CD8-positive, alpha-beta T cell (primary cell): ENCODE measurements at regions of chr2 and their contacts with region 1.

Region 1: GRCh38 chr2:200713003-200713703 is 98.6 kb upstream of the BZW1 start:
- DNase-seq: peak; percentile 84 to 98 (median 92)
- ATAC-seq: peak; percentile 94
- H3K4me3 ChIP-seq: peak overlapping the region; percentile 5 to 25
- H3K4me3 Mint-ChIP-seq: peak overlapping the region; percentile 68
- H3K27ac ChIP-seq: peak overlapping the region; percentile 75 to 98
- H3K27ac Mint-ChIP-seq: peak overlapping the region; percentile 98
- H3K4me1 ChIP-seq: peaks cover 8% of the 10 kb centered on the region
- H3K4me1 Mint-ChIP-seq: peaks cover 11% of the 10 kb centered on the region
- H3K27me3 ChIP-seq: no peaks in the 10 kb centered on the region
- H3K27me3 Mint-ChIP-seq: peaks cover 3% of the 10 kb centered on the region
- CTCF ChIP-seq: peak; percentile 85

Region 2: DNA sequence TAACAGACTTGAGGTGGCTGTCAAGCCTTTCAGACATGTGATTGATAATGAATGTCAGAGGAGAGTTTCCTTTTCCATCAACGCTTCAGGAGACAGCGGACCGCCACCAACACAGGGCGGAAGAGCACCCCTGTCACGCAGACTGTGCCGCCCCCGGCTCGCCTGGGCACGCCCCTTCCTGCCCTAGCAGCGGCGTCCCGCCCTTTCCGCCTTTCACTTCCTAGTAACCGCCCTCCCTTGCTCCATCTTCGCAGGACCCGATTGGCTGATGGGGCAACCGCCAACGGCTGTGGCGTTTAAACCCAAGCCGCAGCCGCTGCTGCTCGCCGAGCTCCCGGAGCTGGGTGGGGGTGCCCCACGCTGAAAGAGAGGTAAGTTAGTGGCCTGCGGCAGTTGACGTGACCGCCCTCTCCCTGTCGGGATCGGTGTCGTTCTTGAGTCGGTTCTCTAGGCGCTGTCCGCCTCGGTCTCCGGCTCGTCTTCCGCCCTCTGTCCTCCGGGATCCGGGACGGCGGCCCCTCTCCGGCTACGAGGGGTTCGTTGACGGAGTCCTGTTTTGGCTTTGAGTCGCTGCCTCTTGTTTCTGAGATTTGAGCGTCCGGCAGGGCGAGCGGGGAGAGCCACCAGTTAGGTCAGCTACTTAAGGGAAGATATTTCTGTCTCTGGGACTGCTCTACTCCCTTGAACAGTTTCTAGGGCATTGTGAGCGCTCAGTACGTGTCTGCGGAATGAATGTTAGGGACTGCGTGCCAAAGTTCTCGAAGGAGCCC is 187.1 kb before region 1 on chr2 and contains the start of gene SGO2:
- CTCF ChIA-PET with region 1: no interaction called
- POLR2A ChIA-PET with region 1: interaction called, 3 read pairs
- intact Hi-C with region 1: loop called (anchors 1 to 5 kb)
- DNase-seq: peak; percentile 92 to 97 (median 95)
- ATAC-seq: peak; percentile 100
- H3K4me3 ChIP-seq: peak within 1 kb of the TSS; percentile 73 to 84
- H3K4me3 Mint-ChIP-seq: peak within 1 kb of the TSS; percentile 91
- H3K27ac ChIP-seq: peak within 1 kb of the TSS; percentile 18 to 71
- H3K27ac Mint-ChIP-seq: peak within 1 kb of the TSS; percentile 87
- H3K4me1 ChIP-seq: peaks cover 7% of the 10 kb centered on the region
- H3K4me1 Mint-ChIP-seq: peaks cover 10% of the 10 kb centered on the region
- H3K27me3 ChIP-seq: no peaks in the 10 kb centered on the region
- H3K27me3 Mint-ChIP-seq: no peaks in the 10 kb centered on the region
- CTCF ChIP-seq: no peak
- total RNA-seq, gene SGO2: 0.52 to 0.69 TPM

Region 3: DNA sequence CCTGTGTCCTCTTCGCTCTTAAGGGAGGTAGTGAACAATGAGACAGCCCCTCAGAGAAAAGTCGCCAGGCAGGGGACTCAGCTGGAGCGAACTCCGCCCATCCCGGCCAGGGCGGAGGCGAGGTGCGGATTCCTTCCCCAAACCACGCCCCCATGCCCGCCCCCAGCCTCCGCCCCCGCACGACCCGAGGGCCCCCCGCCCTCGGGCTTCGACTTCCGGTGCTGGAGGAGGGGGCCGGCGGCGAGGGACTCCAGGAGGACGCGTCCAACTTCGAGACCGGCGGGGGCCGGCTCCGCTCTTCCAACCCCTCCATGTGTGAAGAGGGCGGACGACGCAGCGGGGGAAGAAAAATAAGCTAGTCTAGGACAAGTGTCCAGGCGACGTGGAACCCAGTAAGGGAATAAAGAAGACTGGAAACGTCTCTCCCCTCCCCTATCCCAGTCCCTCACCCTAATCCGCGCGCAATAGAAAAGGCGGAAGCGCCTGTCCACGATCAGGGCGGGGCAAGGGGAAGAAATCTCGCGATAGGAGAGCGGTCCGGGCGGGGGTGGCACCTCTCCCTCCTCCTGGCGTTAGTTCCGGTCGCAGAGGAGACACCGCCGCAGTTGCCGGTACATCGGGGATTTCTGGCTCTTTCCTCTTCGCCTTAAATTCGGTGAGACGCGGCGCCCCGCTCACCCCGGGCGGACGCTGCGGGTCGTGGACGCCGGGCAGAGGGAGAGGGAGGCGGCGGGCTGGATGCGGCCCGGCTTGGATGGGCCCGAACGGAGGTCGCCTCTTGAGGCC is 98.4 kb after region 1 on chr2 and contains the start of gene BZW1:
- CTCF ChIA-PET with region 1: interaction called, 6 read pairs
- POLR2A ChIA-PET with region 1: interaction called, 19 read pairs
- intact Hi-C with region 1: loop called (anchors 1 kb)
- DNase-seq: peak; percentile 94 to 98 (median 97)
- ATAC-seq: peak; percentile 82
- H3K4me3 ChIP-seq: peak within 1 kb of the TSS; percentile 69 to 90
- H3K4me3 Mint-ChIP-seq: peak within 1 kb of the TSS; percentile 99
- H3K27ac ChIP-seq: peak within 1 kb of the TSS; percentile 98
- H3K27ac Mint-ChIP-seq: peak within 1 kb of the TSS; percentile 98
- H3K4me1 ChIP-seq: peaks cover 33% of the 10 kb centered on the region
- H3K4me1 Mint-ChIP-seq: peaks cover 48% of the 10 kb centered on the region
- H3K27me3 ChIP-seq: no peaks in the 10 kb centered on the region
- H3K27me3 Mint-ChIP-seq: no peaks in the 10 kb centered on the region
- CTCF ChIP-seq: no peak
- total RNA-seq, gene BZW1: 330 to 338 TPM

Region 4: DNA sequence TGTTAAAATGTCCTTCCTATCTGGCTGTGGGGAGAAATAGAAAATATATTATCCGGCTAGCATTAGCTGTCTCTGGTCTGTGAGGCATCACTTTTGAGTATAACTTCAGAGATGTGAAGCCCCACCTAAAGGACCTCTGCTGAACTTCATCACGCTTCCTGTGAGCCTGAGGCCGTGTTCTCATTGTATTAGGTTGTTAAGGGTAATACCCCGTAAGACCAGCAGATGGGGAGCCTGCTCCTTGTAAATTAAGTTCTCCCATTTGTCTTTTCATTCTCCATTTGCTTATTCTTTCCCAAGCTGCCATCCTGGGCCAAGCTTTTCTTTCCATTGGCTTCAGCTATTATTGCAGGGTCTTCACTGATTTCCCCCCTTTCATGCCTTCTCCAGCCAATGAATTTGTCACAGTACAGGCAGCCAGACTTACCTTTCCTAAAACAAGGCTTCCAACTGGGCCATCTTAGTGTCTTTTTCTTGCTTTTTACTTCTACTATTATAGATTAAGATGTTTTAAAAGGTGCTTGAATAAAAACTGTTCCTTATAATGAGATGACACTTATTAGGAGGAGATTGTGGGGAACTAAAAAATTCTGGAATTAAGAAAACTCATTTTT is 188.4 kb after region 1 on chr2:
- CTCF ChIA-PET with region 1: interaction called, 3 read pairs
- POLR2A ChIA-PET with region 1: interaction called, 3 read pairs
- intact Hi-C with region 1: loop called (anchors 1 to 2 kb)
- DNase-seq: peak; percentile 36 to 92 (median 73)
- ATAC-seq: peak; percentile 100
- H3K4me3 ChIP-seq: no peak overlapping the region
- H3K4me3 Mint-ChIP-seq: no peak overlapping the region
- H3K27ac ChIP-seq: peak overlapping the region in 1 of 2 experiments; percentile 4
- H3K27ac Mint-ChIP-seq: peak overlapping the region; percentile 45
- H3K4me1 ChIP-seq: peaks cover 4% of the 10 kb centered on the region
- H3K4me1 Mint-ChIP-seq: peaks cover 7% of the 10 kb centered on the region
- H3K27me3 ChIP-seq: no peaks in the 10 kb centered on the region
- H3K27me3 Mint-ChIP-seq: no peaks in the 10 kb centered on the region
- CTCF ChIP-seq: peak; percentile 84

Region 5: DNA sequence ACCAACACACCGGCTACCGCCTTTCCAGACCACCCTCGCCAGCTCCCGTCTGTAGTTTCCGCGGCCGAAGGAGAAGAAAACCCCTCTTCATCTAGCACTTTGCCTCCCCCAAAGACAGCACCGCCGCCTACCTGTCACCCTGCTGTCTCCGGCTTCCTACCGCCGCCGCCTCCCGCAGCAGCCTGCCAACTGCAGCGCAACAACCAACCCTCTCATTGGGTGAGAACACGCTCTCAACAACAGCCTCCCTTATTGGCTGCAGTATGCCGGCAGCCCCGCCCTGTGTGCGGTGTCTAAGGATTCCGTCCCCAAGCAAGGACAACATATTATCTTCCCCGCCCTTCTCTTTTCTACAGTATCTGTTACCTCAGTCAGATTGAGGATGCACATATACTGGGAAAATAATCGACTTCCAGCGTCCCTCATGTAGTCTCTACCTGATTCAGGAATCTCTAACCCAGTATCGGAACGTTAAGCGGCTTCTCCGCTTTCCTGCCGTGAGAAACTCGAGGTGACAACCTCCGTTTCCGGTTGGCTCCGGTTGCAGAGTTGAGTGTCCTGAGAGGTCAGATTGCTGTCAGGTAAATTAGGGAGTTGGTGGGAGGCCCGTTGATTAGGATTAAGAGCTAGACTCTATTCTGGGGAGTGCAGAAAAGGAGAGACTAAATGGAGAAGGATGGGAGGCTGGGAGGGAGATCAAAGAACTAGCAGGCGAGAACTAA is 358.5 kb after region 1 on chr2 and contains the starts of genes HYCC2 and NDUFB3:
- CTCF ChIA-PET with region 1: interaction called, 22 read pairs
- POLR2A ChIA-PET with region 1: interaction called, 8 read pairs
- intact Hi-C with region 1: loop called (anchors 1 to 5 kb)
- DNase-seq: peak; percentile 79 to 98 (median 92)
- ATAC-seq: peak; percentile 93
- H3K4me3 ChIP-seq: peak within 1 kb of the TSS; percentile 61 to 70
- H3K4me3 Mint-ChIP-seq: peak within 1 kb of the TSS; percentile 95
- H3K27ac ChIP-seq: peak within 1 kb of the TSS; percentile 61 to 81
- H3K27ac Mint-ChIP-seq: peak within 1 kb of the TSS; percentile 97
- H3K4me1 ChIP-seq: peaks cover 42% of the 10 kb centered on the region
- H3K4me1 Mint-ChIP-seq: peaks cover 54% of the 10 kb centered on the region
- H3K27me3 ChIP-seq: no peaks in the 10 kb centered on the region
- H3K27me3 Mint-ChIP-seq: no peaks in the 10 kb centered on the region
- CTCF ChIP-seq: peak; percentile 38
- total RNA-seq, gene HYCC2: 35.7 to 36.8 TPM
- total RNA-seq, gene NDUFB3: 11.6 to 13.1 TPM

Region 6: GRCh38 chr2:201176081-201176481 is 462.9 kb after region 1 on chr2:
- CTCF ChIA-PET with region 1: interaction called, 3 read pairs
- POLR2A ChIA-PET with region 1: no interaction called
- intact Hi-C with region 1: loop called (anchors 2 to 5 kb)
- DNase-seq: no peak
- ATAC-seq: no peak
- H3K4me3 ChIP-seq: no peak overlapping the region
- H3K4me3 Mint-ChIP-seq: no peak overlapping the region
- H3K27ac ChIP-seq: no peak overlapping the region
- H3K27ac Mint-ChIP-seq: no peak overlapping the region
- H3K4me1 ChIP-seq: no peaks in the 10 kb centered on the region
- H3K4me1 Mint-ChIP-seq: peaks cover 12% of the 10 kb centered on the region
- H3K27me3 ChIP-seq: no peaks in the 10 kb centered on the region
- H3K27me3 Mint-ChIP-seq: no peaks in the 10 kb centered on the region
- CTCF ChIP-seq: no peak

Region 7: DNA sequence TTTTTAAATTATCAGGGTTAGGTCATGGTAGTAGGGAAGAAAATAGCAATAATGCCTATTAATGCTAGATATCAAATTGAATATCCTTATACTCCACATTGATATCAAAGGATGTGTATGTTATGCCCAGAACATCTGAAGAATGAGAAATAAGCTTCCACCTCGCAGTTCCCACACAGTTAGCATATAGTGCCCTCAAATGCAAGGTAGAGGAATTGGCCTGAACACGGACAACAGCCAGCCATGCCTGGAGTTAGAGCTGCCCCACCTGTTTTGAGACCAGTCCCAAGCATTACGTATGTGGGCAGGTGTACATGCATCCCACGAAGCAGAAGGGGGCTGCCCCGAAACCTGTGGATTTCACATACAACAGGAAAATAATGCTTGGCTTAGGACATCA is 1445.6 kb after region 1 on chr2:
- CTCF ChIA-PET with region 1: no interaction called
- POLR2A ChIA-PET with region 1: no interaction called
- intact Hi-C with region 1: no loop called
- DNase-seq: no peak
- ATAC-seq: no peak
- H3K4me3 ChIP-seq: no peak overlapping the region
- H3K4me3 Mint-ChIP-seq: no peak overlapping the region
- H3K27ac ChIP-seq: no peak overlapping the region
- H3K27ac Mint-ChIP-seq: no peak overlapping the region
- H3K4me1 ChIP-seq: no peaks in the 10 kb centered on the region
- H3K4me1 Mint-ChIP-seq: no peaks in the 10 kb centered on the region
- H3K27me3 ChIP-seq: no peaks in the 10 kb centered on the region
- H3K27me3 Mint-ChIP-seq: peaks cover 14% of the 10 kb centered on the region
- CTCF ChIP-seq: no peak